Heart right ventricle (tissue), 16 donors: ENCODE measurements at regions of chr3 and their contacts with region 1.

Region 1: DNA sequence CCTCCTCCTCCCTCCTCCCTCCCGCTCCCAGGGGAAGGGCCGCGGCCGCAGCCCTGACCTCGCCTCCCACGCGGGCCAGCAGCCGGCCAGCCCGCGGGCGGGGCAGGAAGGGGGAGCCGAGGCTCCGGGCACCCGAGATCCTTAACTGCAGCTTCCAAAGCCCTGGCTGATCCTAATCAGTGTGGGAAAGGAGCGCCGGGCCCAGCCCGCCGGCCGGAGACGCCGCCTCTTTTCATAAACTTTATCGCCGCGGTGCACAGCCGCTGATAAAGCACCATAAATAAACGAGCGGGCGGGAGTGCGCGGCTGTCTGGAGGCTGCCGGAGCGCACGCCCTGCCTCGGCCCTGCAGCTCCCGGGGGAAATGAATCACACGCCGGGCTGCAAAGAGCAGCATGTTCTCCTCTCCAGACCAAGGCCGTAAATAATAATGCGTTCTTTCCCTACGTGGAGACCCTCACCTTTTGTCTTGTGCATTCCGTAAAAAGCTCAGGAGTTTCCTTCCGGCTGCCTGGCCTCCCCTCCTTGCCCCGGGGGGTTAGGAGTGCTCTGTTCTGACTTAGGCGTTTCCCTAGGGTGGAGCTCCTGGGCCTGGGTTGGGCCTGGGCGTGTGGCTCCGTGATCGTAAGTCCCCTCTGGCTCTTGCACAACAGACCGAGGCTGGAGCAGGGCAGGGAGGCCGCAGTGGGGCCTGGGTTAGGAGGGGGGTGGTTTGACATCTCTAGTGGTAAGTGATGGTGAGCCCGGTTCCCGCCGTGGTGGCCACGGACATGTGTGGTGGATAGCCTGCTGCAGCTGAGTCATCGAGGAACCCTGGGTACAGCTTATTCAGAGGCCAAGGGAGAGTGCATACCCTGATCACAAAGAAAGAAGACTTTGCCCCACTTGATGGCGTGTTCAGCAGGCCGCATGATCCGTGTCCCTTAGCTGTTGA is 132.6 kb upstream of the HES1 start:
- DNase-seq: peak; percentile 92
- ATAC-seq: peak; percentile 90 to 96 (median 94)
- H3K4me3 ChIP-seq: peak overlapping the region in 8 of 10 donors; percentile 26 to 52 (median 47)
- H3K27ac ChIP-seq: peak overlapping the region; percentile 23 to 85 (median 74)
- H3K4me1 ChIP-seq: peaks cover 13 to 48% (median 29%) of the 10 kb centered on the region in 9 donors
- H3K27me3 ChIP-seq: peaks cover 0 to 33% (median 8%) of the 10 kb centered on the region in 7 donors
- CTCF ChIP-seq: peak in 1 of 9 donors; percentile 21

Region 2: DNA sequence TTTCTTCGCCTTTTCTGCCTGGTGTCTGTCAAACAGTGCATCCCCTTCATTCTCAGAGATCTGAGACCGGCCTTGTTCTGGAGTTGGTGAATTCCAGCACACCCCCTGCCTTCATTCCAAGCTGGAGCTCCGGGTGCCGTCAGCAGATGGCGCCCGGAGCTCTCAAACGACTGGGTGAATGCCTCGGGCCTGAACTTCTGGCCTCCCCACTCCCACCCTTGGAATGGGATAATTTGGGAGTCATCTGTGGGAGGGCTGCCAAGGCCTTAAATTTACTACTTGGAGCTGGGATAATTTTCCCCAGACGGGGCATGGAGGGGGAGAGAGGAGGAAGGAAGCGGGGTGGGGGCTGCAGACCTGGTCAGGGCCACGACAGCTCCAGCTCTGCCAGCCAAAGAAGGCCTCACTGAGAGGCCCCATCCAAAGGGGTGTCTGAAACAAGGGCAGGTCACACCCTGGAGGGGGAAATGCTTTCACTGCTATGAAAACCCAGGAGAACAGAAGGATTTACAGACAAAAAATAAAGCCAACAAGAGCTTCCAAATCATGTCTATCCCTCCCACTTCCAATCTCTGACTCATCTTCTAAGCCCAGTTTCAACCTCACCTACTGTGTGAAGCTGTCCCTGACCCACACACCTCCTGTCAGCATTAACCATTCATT is 222.4 kb before region 1 on chr3:
- intact Hi-C with region 1: loop called in 6 of 10 experiments (anchors 5 to 10 kb)
- DNase-seq: peak; percentile 72 to 75
- ATAC-seq: peak; percentile 85 to 95 (median 92)
- H3K4me3 ChIP-seq: no peak overlapping the region
- H3K27ac ChIP-seq: no peak overlapping the region
- H3K4me1 ChIP-seq: peaks cover 3 to 22% (median 8%) of the 10 kb centered on the region in 9 donors
- H3K27me3 ChIP-seq: peaks cover 4 to 81% (median 59%) of the 10 kb centered on the region in 7 donors
- CTCF ChIP-seq: peak; percentile 70 to 93 (median 80)

Region 3: GRCh38 chr3:193805509-193805908 is 197.9 kb before region 1 on chr3:
- intact Hi-C with region 1: loop called in 2 of 10 experiments (anchors 5 kb)
- DNase-seq: peak; percentile 85 to 89
- ATAC-seq: peak; percentile 81 to 92 (median 87)
- H3K4me3 ChIP-seq: no peak overlapping the region
- H3K27ac ChIP-seq: peak overlapping the region in 1 of 10 donors; percentile 16
- H3K4me1 ChIP-seq: peaks cover 0 to 16% (median 9%) of the 10 kb centered on the region in 9 donors
- H3K27me3 ChIP-seq: peaks cover 0 to 20% (median 0%) of the 10 kb centered on the region in 7 donors
- CTCF ChIP-seq: no peak

Region 4: GRCh38 chr3:193982258-193982659 is 21.1 kb before region 1 on chr3:
- intact Hi-C with region 1: loop called in 1 of 10 experiments (anchors 2 kb)
- DNase-seq: peak; percentile 82 to 83
- ATAC-seq: peak; percentile 65 to 95 (median 82)
- H3K4me3 ChIP-seq: no peak overlapping the region
- H3K27ac ChIP-seq: peak overlapping the region in 6 of 10 donors; percentile 4 to 39 (median 20)
- H3K4me1 ChIP-seq: peaks cover 9 to 59% (median 44%) of the 10 kb centered on the region in 9 donors
- H3K27me3 ChIP-seq: peaks cover 0 to 21% (median 0%) of the 10 kb centered on the region in 7 donors
- CTCF ChIP-seq: no peak

Region 5: GRCh38 chr3:194255252-194256039 is 252.1 kb after region 1 on chr3:
- intact Hi-C with region 1: loop called in 1 of 10 experiments (anchors 5 kb)
- DNase-seq: peak; percentile 76 to 89
- ATAC-seq: peak; percentile 82 to 94 (median 86)
- H3K4me3 ChIP-seq: peak overlapping the region in 1 of 10 donors; percentile 30
- H3K27ac ChIP-seq: peak overlapping the region in 7 of 10 donors; percentile 27 to 83 (median 68)
- H3K4me1 ChIP-seq: peaks cover 6 to 39% (median 27%) of the 10 kb centered on the region in 9 donors
- H3K27me3 ChIP-seq: peaks cover 0 to 4% (median 0%) of the 10 kb centered on the region in 7 donors
- CTCF ChIP-seq: no peak